ENCODE measurements at regions of chr2 and their contacts with region 1.

Region 1: GRCh38 chr2:98269274-98269673 is 77.0 kb upstream of the CNGA3 start:
- DNase-seq: peak; percentile 20
- ATAC-seq: peak; percentile 65
- H3K4me3 Mint-ChIP-seq: no peak overlapping the region
- H3K27ac Mint-ChIP-seq: no peak overlapping the region
- H3K4me1 Mint-ChIP-seq: no peaks in the 10 kb centered on the region
- H3K27me3 Mint-ChIP-seq: peaks cover under 1% of the 10 kb centered on the region

Region 2: GRCh38 chr2:97890093-97890492 is 379.2 kb before region 1 on chr2:
- CTCF ChIA-PET with region 1: no interaction called
- POLR2A ChIA-PET with region 1: no interaction called
- intact Hi-C with region 1: no loop called
- DNase-seq: no peak
- ATAC-seq: no peak
- H3K4me3 Mint-ChIP-seq: no peak overlapping the region
- H3K27ac Mint-ChIP-seq: no peak overlapping the region
- H3K4me1 Mint-ChIP-seq: no peaks in the 10 kb centered on the region
- H3K27me3 Mint-ChIP-seq: no peaks in the 10 kb centered on the region

Region 3: DNA sequence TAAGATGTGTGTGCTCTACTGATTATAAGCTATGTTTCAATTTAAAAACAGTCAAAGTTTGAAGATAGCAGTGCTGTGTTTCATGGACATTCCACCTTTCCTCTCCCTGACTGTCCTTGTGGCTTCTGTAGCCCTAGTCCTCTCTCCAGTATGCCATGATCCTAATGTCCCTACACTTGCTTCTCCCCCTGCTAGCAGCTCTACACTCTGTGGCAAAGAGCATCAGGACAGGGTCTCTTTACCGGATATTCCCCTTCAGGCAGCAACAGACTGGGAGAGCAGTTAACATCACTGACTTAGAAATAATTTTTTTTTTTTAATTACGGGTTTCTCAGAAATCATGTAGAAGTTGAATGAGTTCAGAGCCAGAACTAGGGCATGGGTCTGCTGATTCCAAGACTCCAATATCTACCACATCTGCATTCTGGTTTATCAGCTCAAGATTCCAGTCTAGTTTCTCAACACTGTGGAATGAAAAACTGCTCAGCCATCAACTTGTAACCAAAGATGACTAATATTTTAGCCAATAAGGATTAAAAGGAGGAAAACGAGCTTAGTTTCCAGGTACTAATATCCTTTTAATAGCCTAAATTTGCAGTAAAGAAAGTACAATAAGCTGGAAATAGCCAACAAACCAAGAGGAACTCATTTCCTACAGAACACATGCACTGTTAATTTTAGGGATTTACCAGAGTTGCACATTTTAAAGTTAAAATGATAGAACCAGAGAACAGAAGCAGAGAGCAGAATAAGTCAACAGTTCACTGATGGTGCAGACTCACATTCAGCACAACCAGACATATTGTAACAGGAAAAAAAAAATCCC is 318.7 kb before region 1 on chr2:
- CTCF ChIA-PET with region 1: no interaction called
- POLR2A ChIA-PET with region 1: no interaction called
- intact Hi-C with region 1: no loop called
- DNase-seq: no peak
- ATAC-seq: no peak
- H3K4me3 Mint-ChIP-seq: no peak overlapping the region
- H3K27ac Mint-ChIP-seq: no peak overlapping the region
- H3K4me1 Mint-ChIP-seq: peaks cover 70% of the 10 kb centered on the region
- H3K27me3 Mint-ChIP-seq: no peaks in the 10 kb centered on the region

Region 4: DNA sequence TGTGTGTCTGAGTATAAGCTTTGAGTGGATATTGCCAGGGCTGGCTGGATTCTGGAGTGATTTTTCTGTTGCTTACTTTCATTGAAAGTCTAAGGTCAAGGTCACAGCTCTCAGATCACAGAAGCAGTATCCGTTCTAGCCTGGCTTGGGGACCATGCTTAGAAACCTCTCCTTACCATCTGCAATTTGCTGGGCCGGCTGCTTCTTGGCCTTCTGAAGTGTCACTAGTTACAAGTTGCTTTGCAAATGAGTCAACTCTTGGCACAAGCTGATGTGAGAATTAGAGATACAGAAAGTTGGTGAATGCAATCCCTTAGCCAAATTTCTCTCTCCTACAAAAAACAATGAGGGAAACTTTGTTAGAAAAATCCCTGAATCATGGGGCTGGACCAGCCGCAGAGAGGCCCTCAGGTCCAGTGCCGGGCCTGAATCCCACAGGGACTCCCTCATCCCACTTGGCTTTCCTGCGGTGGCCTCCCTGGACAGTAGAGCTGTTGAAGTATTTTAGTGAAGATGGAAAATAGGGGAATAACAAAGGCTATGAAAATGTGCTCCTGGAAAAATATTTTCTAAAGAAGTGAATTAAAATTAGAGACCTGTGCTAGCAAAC is 15.7 kb before region 1 on chr2:
- CTCF ChIA-PET with region 1: interaction called, 10 read pairs
- POLR2A ChIA-PET with region 1: no interaction called
- intact Hi-C with region 1: no loop called
- DNase-seq: no peak
- ATAC-seq: no peak
- H3K4me3 Mint-ChIP-seq: no peak overlapping the region
- H3K27ac Mint-ChIP-seq: no peak overlapping the region
- H3K4me1 Mint-ChIP-seq: no peaks in the 10 kb centered on the region
- H3K27me3 Mint-ChIP-seq: peaks cover 8% of the 10 kb centered on the region

Region 5: GRCh38 chr2:98334439-98335078 is 65.3 kb after region 1 on chr2:
- CTCF ChIA-PET with region 1: no interaction called
- POLR2A ChIA-PET with region 1: no interaction called
- intact Hi-C with region 1: no loop called
- DNase-seq: no peak
- ATAC-seq: no peak
- H3K4me3 Mint-ChIP-seq: no peak overlapping the region
- H3K27ac Mint-ChIP-seq: no peak overlapping the region
- H3K4me1 Mint-ChIP-seq: no peaks in the 10 kb centered on the region
- H3K27me3 Mint-ChIP-seq: peaks cover 16% of the 10 kb centered on the region

Measured in activated CD4-positive, alpha-beta T cell treated with anti-CD3 and anti-CD28 coated beads for 36 hours (primary cell).